Mammary epithelial cell (primary cell): ENCODE measurements at regions of chr2 and their contacts with region 1.

Region 1: DNA sequence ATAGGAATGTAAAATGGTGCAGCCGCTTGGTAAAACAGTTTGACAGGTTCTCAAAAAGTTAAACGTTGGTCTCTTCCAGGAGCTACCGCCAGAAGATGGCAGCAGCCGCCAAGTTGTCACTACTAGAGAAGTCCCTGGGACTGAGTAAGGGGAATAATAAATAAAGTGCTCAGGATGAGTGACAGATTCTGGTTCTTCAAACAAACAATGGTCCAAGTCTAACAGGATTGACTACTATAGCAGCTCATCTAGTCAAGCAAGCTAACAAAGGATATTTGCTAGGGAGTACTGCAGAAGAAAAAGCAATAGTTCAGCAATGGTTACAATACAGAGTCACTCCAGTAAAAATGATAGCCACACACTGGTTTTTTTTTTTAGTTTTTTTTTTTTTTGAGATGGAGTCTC is 3.8 kb upstream of the ANAPC1 start:
- DNase-seq: peak; percentile 37
- H3K4me3 ChIP-seq: no peak overlapping the region
- H3K27ac ChIP-seq: no peak overlapping the region
- H3K4me1 ChIP-seq: no peaks in the 10 kb centered on the region
- H3K27me3 ChIP-seq: no peaks in the 10 kb centered on the region
- CTCF ChIP-seq: peak; percentile 57 to 74

Region 2: DNA sequence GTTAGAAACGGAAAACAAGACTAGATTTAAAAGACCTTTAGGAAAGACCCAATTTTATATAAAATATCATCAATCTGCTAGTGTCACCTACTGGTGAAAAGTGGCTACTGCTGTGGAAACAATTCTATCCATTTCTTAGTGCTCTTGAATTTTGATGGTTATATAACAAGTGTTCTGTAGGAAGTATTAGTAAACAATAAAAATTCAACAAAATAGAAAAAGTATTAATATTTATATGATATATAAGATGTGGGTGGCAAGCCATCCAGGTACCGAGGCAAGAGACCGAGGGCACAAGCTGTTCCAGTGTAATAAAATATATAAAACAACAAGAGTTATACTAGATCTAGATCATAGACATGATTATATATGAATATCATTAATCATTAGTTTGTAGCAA is 161.1 kb after region 1 on chr2:
- CTCF ChIA-PET with region 1: no interaction called
- dilution Hi-C with region 1: no loop called
- in situ Hi-C with region 1: loop called (anchors 5 to 10 kb)
- intact Hi-C with region 1: loop called (anchors 1 kb)
- DNase-seq: peak; percentile 38
- H3K4me3 ChIP-seq: no peak overlapping the region
- H3K27ac ChIP-seq: no peak overlapping the region
- H3K4me1 ChIP-seq: peaks cover 7% of the 10 kb centered on the region
- H3K27me3 ChIP-seq: no peaks in the 10 kb centered on the region
- CTCF ChIP-seq: peak; percentile 79 to 92

Region 3: GRCh38 chr2:112584134-112584890 is 696.5 kb after region 1 on chr2 and contains the start of gene CHCHD5:
- CTCF ChIA-PET with region 1: no interaction called
- dilution Hi-C with region 1: no loop called
- in situ Hi-C with region 1: no loop called
- intact Hi-C with region 1: loop called (anchors 5 kb)
- DNase-seq: peak; percentile 97
- H3K4me3 ChIP-seq: peak within 1 kb of the TSS; percentile 67 to 85 (median 72)
- H3K27ac ChIP-seq: peak within 1 kb of the TSS; percentile 98
- H3K4me1 ChIP-seq: peaks cover 21% of the 10 kb centered on the region
- H3K27me3 ChIP-seq: no peaks in the 10 kb centered on the region
- CTCF ChIP-seq: peak in 1 of 2 donors; percentile 16
- total RNA-seq, gene CHCHD5: 10.2 to 42.6 TPM